ENCODE measurements at regions of chr11 and their contacts with region 1.

Region 1: DNA sequence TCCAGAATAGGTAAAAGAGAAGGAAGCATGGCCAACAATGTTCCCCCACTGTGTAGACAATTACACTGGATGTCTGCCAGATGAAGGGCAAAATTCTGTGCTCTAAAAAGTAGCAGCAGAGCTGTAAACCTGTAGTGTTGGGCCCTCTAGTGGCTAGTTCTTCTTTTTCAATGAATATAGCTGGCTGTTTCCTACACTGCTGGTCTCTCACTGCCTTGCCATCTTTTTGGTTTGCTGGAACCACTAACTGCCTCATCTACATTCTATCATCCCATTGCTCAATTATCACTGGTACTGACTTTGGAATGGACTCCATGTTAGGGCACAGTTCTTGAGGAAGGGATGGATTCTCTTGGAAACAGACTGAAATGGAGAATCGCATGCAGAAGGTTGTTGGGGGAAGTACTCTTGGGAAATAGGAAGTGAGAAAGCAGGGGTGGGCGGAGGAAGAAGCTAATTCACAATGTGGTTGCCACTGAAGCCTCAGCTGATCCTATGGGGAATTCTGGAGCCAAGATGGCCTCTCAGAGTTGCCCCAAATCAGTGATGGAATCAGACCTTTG is 17.9 kb downstream of the KCNE3 start:
- DNase-seq: peak; percentile 57
- ATAC-seq: peak; percentile 82
- H3K4me3 Mint-ChIP-seq: no peak overlapping the region
- H3K27ac Mint-ChIP-seq: no peak overlapping the region
- H3K4me1 Mint-ChIP-seq: peaks cover 1% of the 10 kb centered on the region
- H3K27me3 Mint-ChIP-seq: peaks cover 15% of the 10 kb centered on the region

Region 2: GRCh38 chr11:74321487-74322188 is 127.8 kb before region 1 on chr11:
- CTCF ChIA-PET with region 1: interaction called, 11 read pairs
- POLR2A ChIA-PET with region 1: no interaction called
- DNase-seq: peak; percentile 25
- ATAC-seq: no peak
- H3K4me3 Mint-ChIP-seq: no peak overlapping the region
- H3K27ac Mint-ChIP-seq: no peak overlapping the region
- H3K4me1 Mint-ChIP-seq: no peaks in the 10 kb centered on the region
- H3K27me3 Mint-ChIP-seq: peaks cover 22% of the 10 kb centered on the region

Region 3: GRCh38 chr11:74398244-74399159 is 50.9 kb before region 1 on chr11 and contains the start of gene PGM2L1:
- CTCF ChIA-PET with region 1: interaction called, 168 read pairs
- POLR2A ChIA-PET with region 1: no interaction called
- DNase-seq: peak; percentile 95
- ATAC-seq: peak; percentile 84
- H3K4me3 Mint-ChIP-seq: peak within 1 kb of the TSS; percentile 99
- H3K27ac Mint-ChIP-seq: peak within 1 kb of the TSS; percentile 98
- H3K4me1 Mint-ChIP-seq: peaks cover 19% of the 10 kb centered on the region
- H3K27me3 Mint-ChIP-seq: no peaks in the 10 kb centered on the region
- total RNA-seq, gene PGM2L1: 6.1 to 6.5 TPM

Region 4: DNA sequence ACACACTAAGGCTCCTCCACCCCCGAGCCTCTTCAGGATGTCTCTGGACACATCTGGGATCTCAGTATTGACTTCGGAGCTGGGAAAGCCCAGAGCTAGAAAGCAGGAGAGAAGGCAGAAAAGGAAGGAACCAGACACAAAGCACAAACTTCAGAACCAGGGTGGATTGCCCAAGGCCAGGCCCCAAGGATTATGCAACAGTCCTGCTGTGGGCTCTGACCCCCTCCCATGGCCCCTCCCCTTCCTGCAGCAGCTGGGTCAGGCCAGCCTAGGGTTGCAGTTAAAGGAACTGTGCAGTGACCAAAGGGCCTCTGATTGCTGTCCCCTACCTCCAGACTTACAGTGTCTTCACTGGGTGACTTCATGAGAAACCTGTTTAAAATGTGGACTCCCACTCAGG is 12.6 kb after region 1 on chr11:
- CTCF ChIA-PET with region 1: interaction called, 20 read pairs
- POLR2A ChIA-PET with region 1: no interaction called
- DNase-seq: no peak
- ATAC-seq: no peak
- H3K4me3 Mint-ChIP-seq: no peak overlapping the region
- H3K27ac Mint-ChIP-seq: no peak overlapping the region
- H3K4me1 Mint-ChIP-seq: no peaks in the 10 kb centered on the region
- H3K27me3 Mint-ChIP-seq: peaks cover 27% of the 10 kb centered on the region

Region 5: DNA sequence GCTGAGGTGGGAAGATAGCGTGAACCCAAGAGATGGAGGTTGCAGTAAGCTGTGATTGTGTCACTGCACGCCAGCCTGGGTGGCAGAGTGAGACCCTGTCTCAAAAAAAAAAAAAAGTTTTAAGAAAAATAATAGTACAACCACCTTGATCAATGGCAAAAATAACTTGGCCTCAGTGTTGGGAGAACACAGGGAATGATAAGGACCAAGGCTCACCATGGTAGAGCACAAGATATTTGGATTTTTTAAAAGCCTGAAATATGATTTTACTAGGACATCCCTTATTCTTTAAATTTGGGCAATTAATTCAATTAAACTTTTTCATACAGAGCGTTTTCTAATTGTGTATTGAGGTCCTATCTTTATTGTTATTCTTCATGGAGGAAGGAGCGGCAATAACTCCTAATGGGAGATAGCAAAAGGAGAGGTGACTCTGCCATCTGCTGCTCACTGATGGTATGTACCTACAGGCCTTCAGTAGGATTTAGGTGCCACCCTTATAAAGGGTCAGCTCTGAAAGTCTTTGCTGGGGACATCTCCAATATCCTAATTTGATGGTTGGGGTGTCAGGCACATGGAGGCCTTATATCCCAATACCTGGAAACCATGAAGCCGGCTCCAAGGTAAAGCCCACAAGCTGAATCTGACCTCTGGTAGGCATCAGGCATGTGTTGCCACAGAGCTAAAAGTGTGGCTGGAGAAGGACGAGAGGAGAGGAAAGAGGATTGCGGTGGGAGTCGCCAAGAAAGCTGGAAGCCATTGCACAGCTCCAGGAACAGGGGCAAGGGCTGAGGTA is 121.0 kb after region 1 on chr11:
- CTCF ChIA-PET with region 1: interaction called, 65 read pairs
- POLR2A ChIA-PET with region 1: interaction called, 4 read pairs
- DNase-seq: peak; percentile 28
- ATAC-seq: no peak
- H3K4me3 Mint-ChIP-seq: no peak overlapping the region
- H3K27ac Mint-ChIP-seq: no peak overlapping the region
- H3K4me1 Mint-ChIP-seq: no peaks in the 10 kb centered on the region
- H3K27me3 Mint-ChIP-seq: peaks cover 2% of the 10 kb centered on the region